Mucosa of descending colon (tissue), 3 donors: ENCODE measurements at regions of chr4 and their contacts with region 1.

Region 1: DNA sequence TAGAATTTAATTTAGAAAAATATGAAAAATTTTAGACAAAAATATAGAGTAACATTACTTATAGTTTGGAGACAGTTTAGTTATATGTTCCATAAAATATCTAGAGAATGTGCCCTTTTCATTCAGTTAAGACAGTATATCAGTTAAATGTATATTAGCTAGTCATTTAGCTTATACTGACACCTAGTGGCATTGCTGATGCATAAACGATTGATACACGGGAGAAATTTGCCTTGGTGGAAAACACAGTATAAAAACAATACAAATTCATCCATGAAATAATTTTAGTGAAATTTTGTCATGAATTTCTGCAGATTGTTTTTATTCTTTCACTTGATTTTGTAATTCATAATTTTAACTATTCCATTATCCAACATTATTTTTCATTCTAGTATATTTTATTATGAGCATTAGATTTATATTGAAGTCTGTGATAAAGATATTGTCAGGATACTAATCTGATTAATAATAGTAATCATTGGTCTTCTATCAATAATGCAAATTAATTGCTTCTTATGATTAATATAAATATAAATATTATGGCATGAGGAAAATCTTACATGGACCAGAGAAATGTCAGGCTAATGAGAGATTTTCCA is 219.0 kb downstream of the TLL1 start:
- DNase-seq: peak in 1 of 3 donors; percentile 23
- ATAC-seq: no peak
- H3K4me3 ChIP-seq: no peak overlapping the region
- H3K4me1 ChIP-seq: no peaks in the 10 kb centered on the region
- CTCF ChIP-seq: peak; percentile 23

Region 2: GRCh38 chr4:165537028-165537648 is 554.9 kb before region 1 on chr4:
- intact Hi-C with region 1: loop called (anchors 5 kb)
- DNase-seq: peak in 1 of 3 donors; percentile 14
- ATAC-seq: peak; percentile 66
- H3K4me3 ChIP-seq: no peak overlapping the region
- H3K4me1 ChIP-seq: no peaks in the 10 kb centered on the region
- CTCF ChIP-seq: peak; percentile 26

Region 3: DNA sequence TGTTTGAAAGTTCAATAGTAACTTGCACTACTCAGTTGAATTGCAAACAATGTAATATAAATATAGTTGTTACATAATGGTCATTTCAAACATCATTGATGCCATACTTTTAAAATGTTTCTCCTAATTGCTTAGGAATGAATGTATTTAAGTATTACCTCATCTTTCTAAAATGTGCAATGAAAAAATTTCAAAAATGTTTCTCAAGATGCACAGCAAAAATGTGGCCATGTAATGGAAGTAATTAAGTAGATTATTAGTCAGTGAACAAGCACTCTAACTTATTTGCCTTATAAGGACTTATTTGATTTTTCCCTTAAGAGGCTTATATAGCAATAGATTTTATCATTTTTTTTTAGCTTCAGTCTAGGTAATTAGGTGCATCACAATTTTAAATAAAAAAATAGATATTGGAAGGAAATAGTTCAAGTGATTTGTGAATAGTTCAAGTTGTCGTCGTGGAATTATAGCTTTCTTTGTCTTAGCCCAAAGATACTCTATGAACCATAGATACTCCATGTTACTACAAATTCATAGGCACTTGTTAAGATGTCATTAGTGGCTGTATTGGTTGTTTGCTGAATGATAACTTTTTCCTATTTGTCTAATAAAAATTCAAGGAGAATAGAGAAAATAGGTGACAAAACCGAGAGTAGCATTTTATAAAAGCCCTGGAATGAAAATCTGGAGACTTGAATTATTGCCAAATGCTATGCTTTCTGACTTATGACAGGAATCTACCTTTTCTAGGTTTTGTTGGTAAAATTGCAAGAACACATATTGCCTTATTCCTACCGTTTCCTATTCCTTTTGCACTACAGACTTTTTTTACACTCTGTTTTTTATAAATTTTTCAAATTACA is 100.5 kb before region 1 on chr4:
- intact Hi-C with region 1: no loop called
- DNase-seq: no peak
- ATAC-seq: no peak
- H3K4me3 ChIP-seq: no peak overlapping the region
- H3K4me1 ChIP-seq: no peaks in the 10 kb centered on the region
- CTCF ChIP-seq: no peak